ENCODE measurements at regions of chr4 and their contacts with region 1.

Region 1: DNA sequence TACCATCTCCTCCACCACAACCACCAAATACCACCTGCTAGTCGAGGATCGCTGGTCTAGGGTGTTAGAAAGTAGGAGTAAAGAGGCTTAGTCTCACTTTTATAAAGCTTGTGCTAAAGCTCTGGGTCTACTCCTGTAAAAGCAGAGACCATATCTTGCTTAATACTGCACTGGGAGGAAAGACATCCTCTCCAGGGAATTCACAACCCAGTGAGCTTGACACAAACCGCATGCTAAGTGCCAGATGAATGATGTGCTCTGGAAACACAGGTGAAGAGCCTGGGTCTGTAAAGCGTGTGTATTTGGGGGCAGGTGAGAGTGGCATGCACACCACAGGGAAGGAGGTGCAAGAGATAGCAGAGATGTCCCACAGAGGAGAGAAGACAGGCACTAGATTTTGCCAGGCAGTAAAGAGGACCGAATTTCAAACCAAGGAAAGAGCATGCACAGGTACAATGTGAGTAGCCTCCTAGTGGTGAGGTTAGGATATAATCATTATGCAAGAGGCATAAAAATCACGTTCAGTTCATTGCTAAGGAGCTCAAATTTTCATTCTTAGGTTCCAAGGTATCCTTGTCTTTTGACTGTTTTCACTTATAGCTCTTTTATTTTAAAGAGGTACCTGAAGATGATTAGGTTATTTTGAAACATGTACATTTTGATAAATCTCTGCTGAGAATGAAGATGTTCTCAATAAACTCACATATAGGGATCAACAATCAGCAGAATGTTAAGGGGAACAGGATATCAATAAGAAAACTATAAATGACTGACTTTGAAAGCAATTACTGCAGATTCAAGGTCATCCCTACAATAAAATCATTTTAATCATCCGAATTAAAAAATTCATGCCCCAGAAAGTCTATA is 20.7 kb downstream of the TAPT1 start:
- DNase-seq: no peak
- H3K4me3 Mint-ChIP-seq: no peak overlapping the region
- H3K27ac Mint-ChIP-seq: no peak overlapping the region
- H3K4me1 Mint-ChIP-seq: peaks cover 37% of the 10 kb centered on the region
- H3K27me3 Mint-ChIP-seq: no peaks in the 10 kb centered on the region

Region 2: DNA sequence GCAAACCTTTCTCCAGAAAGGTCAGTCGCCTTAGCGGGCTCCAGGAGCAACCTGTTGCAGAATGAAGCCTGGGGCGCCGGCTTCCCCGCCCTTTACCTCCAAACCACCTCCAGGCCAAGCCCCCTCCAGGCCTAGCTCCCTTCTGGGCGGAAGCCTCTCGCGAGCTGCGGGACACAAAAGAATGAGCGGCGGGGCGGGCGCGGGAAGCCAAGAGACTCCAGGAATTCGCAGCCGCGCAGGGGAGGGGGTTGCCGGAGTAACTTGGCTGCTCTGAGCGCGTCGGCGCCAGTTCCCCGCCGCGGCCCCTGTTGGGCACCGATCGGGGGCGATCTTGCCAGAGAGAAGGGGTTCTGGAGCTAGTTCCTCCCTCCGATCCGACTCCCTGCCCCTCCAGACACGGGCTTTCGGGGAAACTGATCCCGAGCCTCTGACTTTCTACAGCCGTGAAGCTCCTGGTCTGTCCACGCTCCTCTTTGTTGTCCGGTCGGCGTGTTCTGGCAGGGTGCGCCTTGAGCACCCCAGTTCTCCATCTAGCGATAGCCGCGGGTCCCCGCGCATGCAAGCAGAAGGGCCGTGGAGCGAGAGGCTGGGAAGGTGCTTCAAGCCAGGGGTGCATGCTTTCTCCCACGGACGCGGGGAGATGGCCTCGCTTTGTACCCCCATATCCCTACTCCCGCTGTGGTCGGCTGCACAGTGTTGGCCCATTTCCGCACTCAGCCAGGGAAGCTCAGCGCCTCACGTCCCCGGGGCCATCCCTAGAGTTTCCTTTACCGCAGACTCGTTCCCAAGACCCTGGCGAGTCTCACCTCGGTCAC is 122.9 kb before region 1 on chr4:
- CTCF ChIA-PET with region 1: no interaction called
- POLR2A ChIA-PET with region 1: no interaction called
- intact Hi-C with region 1: loop called (anchors 5 kb)
- DNase-seq: no peak
- H3K4me3 Mint-ChIP-seq: peak overlapping the region; percentile 56
- H3K27ac Mint-ChIP-seq: no peak overlapping the region
- H3K4me1 Mint-ChIP-seq: peaks cover 21% of the 10 kb centered on the region
- H3K27me3 Mint-ChIP-seq: peaks cover 68% of the 10 kb centered on the region

Region 3: DNA sequence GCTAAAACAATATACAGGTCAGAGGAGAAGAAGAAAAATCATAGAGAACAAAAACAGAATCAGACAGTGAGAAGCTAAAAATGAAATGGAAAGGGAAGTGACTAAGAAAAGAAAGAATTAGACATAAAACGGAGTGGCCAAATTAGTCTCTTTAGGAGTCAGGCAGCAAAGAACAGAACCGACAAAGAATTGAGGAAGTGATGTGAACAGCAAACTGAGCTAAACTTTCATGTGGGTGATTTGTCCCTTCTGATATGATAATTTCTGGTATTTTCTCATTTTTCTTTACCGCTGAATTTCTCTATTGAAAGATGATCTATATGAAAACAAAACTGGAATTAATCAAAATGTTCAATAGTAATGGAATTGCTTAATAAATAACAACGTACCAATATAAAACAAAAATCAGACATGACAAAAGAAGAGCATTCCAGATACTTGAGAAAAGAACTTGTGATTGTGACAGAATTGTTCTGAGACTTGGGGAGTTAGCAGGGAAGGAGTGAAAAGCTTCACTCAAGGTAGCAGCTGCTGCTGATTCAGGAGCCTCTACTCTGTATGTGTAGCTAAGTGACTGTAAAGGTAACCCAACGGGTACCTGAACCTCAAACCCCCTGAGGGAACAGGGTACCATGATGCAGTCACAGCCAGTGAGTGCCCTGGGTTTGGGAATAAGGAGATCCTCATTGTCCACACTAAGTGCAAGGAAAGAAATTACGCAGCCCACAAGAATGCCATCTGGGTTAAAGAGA is 11.9 kb after region 1 on chr4:
- CTCF ChIA-PET with region 1: interaction called, 14 read pairs
- POLR2A ChIA-PET with region 1: interaction called, 4 read pairs
- intact Hi-C with region 1: no loop called
- DNase-seq: no peak
- H3K4me3 Mint-ChIP-seq: peak overlapping the region; percentile 13
- H3K27ac Mint-ChIP-seq: peak overlapping the region; percentile 47
- H3K4me1 Mint-ChIP-seq: peaks cover 69% of the 10 kb centered on the region
- H3K27me3 Mint-ChIP-seq: no peaks in the 10 kb centered on the region

Region 4: GRCh38 chr4:16225863-16226815 is 20.6 kb after region 1 on chr4 and contains the start of gene TAPT1:
- CTCF ChIA-PET with region 1: interaction called, 12 read pairs
- POLR2A ChIA-PET with region 1: no interaction called
- intact Hi-C with region 1: loop called (anchors 2 kb)
- DNase-seq: peak; percentile 87
- H3K4me3 Mint-ChIP-seq: peak within 1 kb of the TSS; percentile 94
- H3K27ac Mint-ChIP-seq: peak within 1 kb of the TSS; percentile 96
- H3K4me1 Mint-ChIP-seq: peaks cover 60% of the 10 kb centered on the region
- H3K27me3 Mint-ChIP-seq: no peaks in the 10 kb centered on the region
- total RNA-seq, gene TAPT1: 35.6 TPM

Measured in activated CD4-positive, alpha-beta memory T cell treated with anti-CD3 and anti-CD28 coated beads for 36 hours (primary cell).